Activated CD4-positive, alpha-beta memory T cell treated with anti-CD3 and anti-CD28 coated beads, Interleukin-2, amount 10 ng/mL, durations not matched to agents 7 days and 5 days (primary cell): ENCODE measurements at regions of chr16 and their contacts with region 1.

Region 1: DNA sequence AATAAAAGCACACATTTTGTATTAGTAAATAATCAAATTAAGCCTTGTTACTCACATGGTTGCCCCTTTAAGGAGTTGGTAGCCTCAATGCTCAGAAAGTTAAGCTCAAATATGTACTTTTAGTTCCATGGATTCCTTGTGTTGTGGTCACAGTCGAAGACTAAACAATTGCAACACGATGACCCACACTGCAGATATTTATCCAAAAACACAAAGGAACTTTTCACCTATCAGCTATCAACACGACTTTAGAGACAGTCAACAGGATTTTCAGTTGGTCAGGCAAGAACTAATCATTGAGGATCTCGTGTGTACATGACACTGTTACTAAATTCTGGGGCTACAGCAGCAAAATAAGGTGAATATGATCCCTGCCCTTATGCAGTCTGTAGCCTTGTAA is 47.4 kb upstream of the NUDT7 start:
- DNase-seq: no peak
- H3K4me3 Mint-ChIP-seq: no peak overlapping the region
- H3K27ac Mint-ChIP-seq: no peak overlapping the region
- H3K4me1 Mint-ChIP-seq: no peaks in the 10 kb centered on the region
- H3K27me3 Mint-ChIP-seq: peaks cover 3% of the 10 kb centered on the region

Region 2: DNA sequence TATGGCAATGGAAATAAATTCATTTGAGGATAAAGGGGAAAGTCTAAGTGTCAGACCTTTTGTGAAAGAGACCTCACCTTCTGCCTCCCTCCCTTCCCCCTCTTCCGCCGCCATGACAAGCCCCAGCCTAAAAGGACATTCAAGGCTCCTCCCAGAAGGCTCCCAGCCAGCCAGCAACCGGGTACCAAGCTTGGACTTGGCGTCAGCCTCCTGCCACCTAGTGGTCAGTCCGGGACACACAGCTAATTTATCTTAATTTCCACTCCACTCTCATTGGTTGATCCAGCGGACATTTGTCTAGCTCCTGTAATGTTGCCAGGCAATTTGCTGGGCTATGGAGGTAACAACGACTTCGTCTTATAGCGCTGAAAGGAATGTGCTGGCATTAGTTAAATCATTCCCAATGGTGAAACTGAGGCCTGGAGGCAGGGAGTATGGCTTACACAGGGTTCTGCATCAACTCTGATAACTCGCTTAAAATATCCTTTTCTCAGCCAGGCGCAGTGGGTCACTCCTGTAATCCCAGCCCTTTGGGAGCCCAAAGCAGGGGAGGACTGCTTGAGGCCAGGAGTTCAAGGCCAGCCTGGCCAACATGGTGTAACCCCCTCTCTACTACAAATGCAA is 328.1 kb after region 1 on chr16:
- CTCF ChIA-PET with region 1: interaction called, 10 read pairs
- POLR2A ChIA-PET with region 1: no interaction called
- DNase-seq: peak; percentile 76
- H3K4me3 Mint-ChIP-seq: no peak overlapping the region
- H3K27ac Mint-ChIP-seq: no peak overlapping the region
- H3K4me1 Mint-ChIP-seq: no peaks in the 10 kb centered on the region
- H3K27me3 Mint-ChIP-seq: no peaks in the 10 kb centered on the region